Dorsolateral prefrontal cortex (tissue), 120 donors: ENCODE measurements at regions of chrX and their contacts with region 1.

Region 1: DNA sequence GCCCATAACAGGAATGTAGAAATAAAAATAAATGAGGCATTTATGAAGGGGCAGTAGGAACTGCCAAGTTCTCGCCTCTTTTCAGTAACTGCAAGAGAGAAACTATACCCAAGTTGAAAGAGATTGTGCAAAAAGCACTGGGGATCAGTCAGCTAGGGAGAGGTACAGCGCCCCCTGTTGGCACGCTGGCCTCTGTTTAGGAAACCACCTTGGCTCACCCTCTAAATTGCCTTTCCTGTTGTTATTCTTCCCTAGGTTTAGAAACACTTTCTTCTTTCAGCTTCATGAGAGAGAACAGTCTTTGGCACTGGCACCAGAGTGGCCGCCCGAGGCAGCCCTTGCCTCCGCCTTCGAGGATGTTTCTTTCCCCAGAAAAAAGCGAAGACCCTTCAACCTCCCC is 348.5 kb downstream of the MID1IP1 start:
- DNase-seq: peak; percentile 28 to 75 (median 65)
- H3K4me3 ChIP-seq: peak overlapping the region in 1 of 59 donors; percentile 3
- H3K27ac ChIP-seq: no peak overlapping the region
- H3K27me3 ChIP-seq: peaks cover 0 to 79% (median 18%) of the 10 kb centered on the region in 45 donors
- CTCF ChIP-seq: peak; percentile 48 to 90 (median 72)

Region 2: GRCh38 chrX:38985375-38985774 is 164.4 kb before region 1 on chrX:
- intact Hi-C with region 1: loop called in 1 of 2 experiments (anchors 10 kb)
- DNase-seq: no peak
- H3K4me3 ChIP-seq: no peak overlapping the region
- H3K27ac ChIP-seq: no peak overlapping the region
- H3K27me3 ChIP-seq: peaks cover 0 to 62% (median 7%) of the 10 kb centered on the region in 45 donors
- CTCF ChIP-seq: peak in 50 of 56 donors; percentile 7 to 59 (median 35)

Region 3: GRCh38 chrX:39275500-39276068 is 125.8 kb after region 1 on chrX:
- intact Hi-C with region 1: no loop called
- DNase-seq: no peak
- H3K4me3 ChIP-seq: no peak overlapping the region
- H3K27ac ChIP-seq: no peak overlapping the region
- H3K27me3 ChIP-seq: peaks cover 0 to 20% (median 0%) of the 10 kb centered on the region in 45 donors
- CTCF ChIP-seq: no peak